ENCODE measurements at regions of chr1 and their contacts with region 1.

Region 1: GRCh38 chr1:194940336-194941030 is 1667.8 kb downstream of the KCNT2 start:
- DNase-seq: no peak
- ATAC-seq: no peak
- H3K4me3 ChIP-seq: no peak overlapping the region
- H3K27ac ChIP-seq: no peak overlapping the region
- H3K4me1 ChIP-seq: no peaks in the 10 kb centered on the region
- H3K27me3 ChIP-seq: no peaks in the 10 kb centered on the region
- CTCF ChIP-seq: no peak
- EP300 ChIP-seq: no peak
- POLR2A ChIP-seq: no peak
- RAD21 ChIP-seq: no peak

Region 2: DNA sequence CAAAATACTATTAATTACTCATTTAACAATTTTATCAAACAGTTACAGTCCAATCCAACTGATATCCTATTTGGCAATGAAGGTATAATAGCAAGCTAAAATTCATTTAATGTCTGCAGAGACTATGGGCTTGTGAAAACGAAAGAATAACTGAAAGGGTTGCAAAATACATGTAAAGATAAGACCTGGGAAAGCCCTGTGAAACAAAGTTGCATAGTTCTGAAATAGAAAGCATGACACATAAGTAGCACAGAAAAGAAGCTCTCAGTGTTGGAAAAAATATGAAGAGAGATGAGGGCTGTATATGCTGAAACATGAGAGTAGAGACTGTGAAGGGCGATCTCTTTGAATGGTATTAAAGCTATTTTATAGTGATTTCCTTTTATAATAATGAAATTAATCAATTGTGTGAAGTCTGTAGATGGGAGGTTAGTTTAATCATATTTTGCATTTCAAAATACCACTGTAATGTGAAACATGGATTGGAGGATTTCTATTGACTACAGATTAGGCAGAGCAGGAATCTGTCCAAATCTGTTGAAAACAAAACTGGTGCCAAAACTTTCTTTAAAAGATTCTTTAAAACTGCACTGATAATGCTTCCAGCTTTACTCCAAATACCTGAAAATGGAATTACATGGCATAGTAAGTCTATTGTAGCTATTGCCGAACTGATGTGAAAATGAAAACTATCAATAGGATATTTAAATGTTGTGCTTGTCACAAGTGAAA is 235.2 kb before region 1 on chr1:
- CTCF ChIA-PET with region 1: no interaction called
- POLR2A ChIA-PET with region 1: no interaction called
- RAD21 ChIA-PET with region 1: no interaction called
- SMC1A ChIA-PET with region 1: no interaction called
- in situ Hi-C with region 1: no loop called
- intact Hi-C with region 1: no loop called
- DNase-seq: no peak
- ATAC-seq: peak; percentile 83
- H3K4me3 ChIP-seq: no peak overlapping the region
- H3K27ac ChIP-seq: no peak overlapping the region
- H3K4me1 ChIP-seq: no peaks in the 10 kb centered on the region
- H3K27me3 ChIP-seq: no peaks in the 10 kb centered on the region
- CTCF ChIP-seq: no peak
- EP300 ChIP-seq: no peak
- POLR2A ChIP-seq: no peak
- RAD21 ChIP-seq: no peak

Region 3: DNA sequence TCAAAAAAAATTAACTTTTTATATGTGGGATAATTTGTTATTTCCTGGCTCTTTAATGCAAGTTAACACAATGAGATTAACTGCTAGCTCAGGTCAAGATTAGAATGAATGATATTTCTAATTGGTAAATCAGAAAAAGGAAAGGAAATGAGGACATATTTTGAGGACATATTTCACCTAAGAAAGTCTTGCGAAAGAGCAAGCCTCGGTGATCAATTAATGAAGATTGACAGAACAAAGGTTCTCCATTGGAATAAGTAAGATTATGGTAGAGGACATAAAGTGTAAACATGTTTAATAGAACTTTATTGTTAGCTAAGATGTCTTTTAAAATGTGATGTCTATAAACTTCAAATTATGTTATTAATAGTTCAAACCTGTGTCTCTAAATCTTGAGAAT is 50.0 kb after region 1 on chr1:
- CTCF ChIA-PET with region 1: no interaction called
- POLR2A ChIA-PET with region 1: no interaction called
- RAD21 ChIA-PET with region 1: no interaction called
- SMC1A ChIA-PET with region 1: no interaction called
- in situ Hi-C with region 1: no loop called
- intact Hi-C with region 1: loop called (anchors 5 kb)
- DNase-seq: no peak
- ATAC-seq: no peak
- H3K4me3 ChIP-seq: no peak overlapping the region
- H3K27ac ChIP-seq: no peak overlapping the region
- H3K4me1 ChIP-seq: no peaks in the 10 kb centered on the region
- H3K27me3 ChIP-seq: no peaks in the 10 kb centered on the region
- CTCF ChIP-seq: no peak
- EP300 ChIP-seq: no peak
- POLR2A ChIP-seq: no peak
- RAD21 ChIP-seq: no peak

Region 4: GRCh38 chr1:195130598-195130997 is 190.1 kb after region 1 on chr1:
- CTCF ChIA-PET with region 1: no interaction called
- POLR2A ChIA-PET with region 1: no interaction called
- RAD21 ChIA-PET with region 1: no interaction called
- SMC1A ChIA-PET with region 1: no interaction called
- in situ Hi-C with region 1: no loop called
- intact Hi-C with region 1: no loop called
- DNase-seq: no peak
- ATAC-seq: no peak
- H3K4me3 ChIP-seq: no peak overlapping the region
- H3K27ac ChIP-seq: no peak overlapping the region
- H3K4me1 ChIP-seq: no peaks in the 10 kb centered on the region
- H3K27me3 ChIP-seq: no peaks in the 10 kb centered on the region
- CTCF ChIP-seq: no peak
- EP300 ChIP-seq: no peak
- POLR2A ChIP-seq: no peak
- RAD21 ChIP-seq: no peak